Panc1 (cell line): ENCODE measurements at regions of chr16 and their contacts with region 1.

Region 1: GRCh38 chr16:66894948-66895688 is 14.8 kb downstream of the PDP2 start:
- DNase-seq: no peak
- ATAC-seq: peak; percentile 91
- H3K4me3 ChIP-seq: no peak overlapping the region
- H3K27ac ChIP-seq: no peak overlapping the region
- H3K4me1 ChIP-seq: peaks cover 7% of the 10 kb centered on the region
- H3K27me3 ChIP-seq: no peaks in the 10 kb centered on the region
- CTCF ChIP-seq: peak; percentile 87

Region 2: DNA sequence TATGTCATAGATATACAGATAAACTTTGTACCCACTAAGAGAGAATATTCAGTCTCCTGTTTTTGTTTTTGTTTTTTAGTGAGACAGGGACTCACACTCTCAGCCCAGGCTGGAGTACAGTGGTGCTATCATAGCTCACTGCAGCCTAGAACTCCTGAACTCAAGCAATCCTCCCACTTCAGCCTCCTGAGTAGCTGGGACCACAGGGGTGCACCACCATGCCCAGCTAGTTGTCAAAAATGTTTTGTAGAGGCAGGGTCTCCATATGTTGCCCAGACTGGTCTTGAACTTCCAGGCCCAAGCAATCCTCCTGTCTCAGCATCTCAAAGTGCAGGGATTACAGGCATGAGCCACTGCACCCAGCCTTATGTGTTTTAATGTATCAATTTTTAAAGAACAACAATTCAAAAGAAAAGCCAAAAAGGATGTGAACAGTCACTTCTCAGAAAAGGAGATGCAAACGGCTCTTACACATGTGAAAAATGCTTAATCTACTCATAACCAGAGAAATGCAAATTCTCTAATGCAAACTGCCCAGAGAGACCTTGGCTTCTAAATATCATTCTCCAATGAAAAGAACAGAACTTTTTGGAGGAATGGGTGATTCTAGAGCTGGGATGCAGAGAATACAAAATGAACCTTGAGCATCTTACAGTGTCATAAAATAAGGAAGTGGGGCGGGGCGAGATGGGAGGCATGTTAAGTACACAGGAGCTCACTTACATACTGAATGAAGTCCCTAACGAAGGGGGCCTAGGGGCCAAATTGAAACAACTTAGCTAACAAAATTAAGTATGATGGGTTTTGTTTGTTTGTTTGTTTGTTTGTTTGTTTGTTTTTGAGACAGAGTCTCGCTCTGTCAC is 297.9 kb before region 1 on chr16:
- CTCF ChIA-PET with region 1: no interaction called
- POLR2A ChIA-PET with region 1: no interaction called
- in situ Hi-C with region 1: no loop called
- intact Hi-C with region 1: no loop called
- DNase-seq: no peak
- ATAC-seq: no peak
- H3K4me3 ChIP-seq: no peak overlapping the region
- H3K27ac ChIP-seq: no peak overlapping the region
- H3K4me1 ChIP-seq: no peaks in the 10 kb centered on the region
- H3K27me3 ChIP-seq: no peaks in the 10 kb centered on the region
- CTCF ChIP-seq: no peak

Region 3: GRCh38 chr16:66947302-66948065 is 52.4 kb after region 1 on chr16:
- CTCF ChIA-PET with region 1: no interaction called
- POLR2A ChIA-PET with region 1: no interaction called
- in situ Hi-C with region 1: no loop called
- intact Hi-C with region 1: loop called (anchors 5 kb)
- DNase-seq: peak; percentile 69
- ATAC-seq: peak; percentile 87
- H3K4me3 ChIP-seq: peak overlapping the region; percentile 39 to 57
- H3K27ac ChIP-seq: no peak overlapping the region
- H3K4me1 ChIP-seq: no peaks in the 10 kb centered on the region
- H3K27me3 ChIP-seq: no peaks in the 10 kb centered on the region
- CTCF ChIP-seq: peak; percentile 84